PC-9 (cell line): ENCODE measurements at regions of chr7 and their contacts with region 1.

Region 1: DNA sequence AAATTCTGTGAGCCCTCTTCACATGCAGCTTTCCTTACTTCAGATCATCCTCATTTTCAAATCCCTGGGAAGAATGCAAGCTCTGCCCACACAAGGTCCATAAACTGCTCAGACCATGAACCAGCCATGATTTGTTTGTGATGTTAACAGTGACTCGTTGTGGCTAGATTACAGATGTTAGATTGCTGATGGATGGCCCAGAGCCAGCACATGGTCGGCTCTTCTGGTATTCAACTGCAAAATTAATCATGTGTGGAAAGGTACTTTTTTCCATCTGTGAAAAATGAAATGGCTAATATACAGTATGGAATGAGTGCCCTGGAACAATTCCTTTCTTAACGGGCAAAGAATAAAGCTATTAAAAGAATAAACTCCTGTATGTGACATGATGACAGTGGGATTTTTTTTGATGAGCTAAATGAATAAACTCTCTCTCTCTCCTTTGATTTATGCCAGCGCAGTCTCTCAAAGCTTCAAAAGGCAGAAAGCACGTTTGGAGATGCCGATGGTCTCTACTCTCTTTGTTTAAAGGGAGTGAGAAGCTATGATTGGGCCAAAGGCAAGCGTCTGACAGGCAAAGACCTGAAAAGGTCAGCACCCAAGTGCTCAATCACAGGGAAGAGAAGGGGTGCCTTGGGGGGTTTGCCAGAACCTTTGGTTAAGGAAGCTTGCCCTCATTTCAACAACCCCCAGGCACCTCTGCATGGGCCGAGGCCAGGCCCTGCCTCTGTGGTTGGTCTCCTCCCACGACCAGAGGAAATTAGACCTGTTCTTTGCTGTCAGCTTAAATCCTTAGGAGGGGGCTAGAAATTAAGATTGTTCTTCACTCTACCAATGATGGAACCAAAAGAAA is 444.0 kb upstream of the NFE2L3 start:
- DNase-seq: no peak
- H3K4me3 ChIP-seq: no peak overlapping the region
- H3K27ac ChIP-seq: no peak overlapping the region
- H3K4me1 ChIP-seq: no peaks in the 10 kb centered on the region
- H3K27me3 ChIP-seq: peaks cover 49% of the 10 kb centered on the region
- CTCF ChIP-seq: no peak

Region 2: DNA sequence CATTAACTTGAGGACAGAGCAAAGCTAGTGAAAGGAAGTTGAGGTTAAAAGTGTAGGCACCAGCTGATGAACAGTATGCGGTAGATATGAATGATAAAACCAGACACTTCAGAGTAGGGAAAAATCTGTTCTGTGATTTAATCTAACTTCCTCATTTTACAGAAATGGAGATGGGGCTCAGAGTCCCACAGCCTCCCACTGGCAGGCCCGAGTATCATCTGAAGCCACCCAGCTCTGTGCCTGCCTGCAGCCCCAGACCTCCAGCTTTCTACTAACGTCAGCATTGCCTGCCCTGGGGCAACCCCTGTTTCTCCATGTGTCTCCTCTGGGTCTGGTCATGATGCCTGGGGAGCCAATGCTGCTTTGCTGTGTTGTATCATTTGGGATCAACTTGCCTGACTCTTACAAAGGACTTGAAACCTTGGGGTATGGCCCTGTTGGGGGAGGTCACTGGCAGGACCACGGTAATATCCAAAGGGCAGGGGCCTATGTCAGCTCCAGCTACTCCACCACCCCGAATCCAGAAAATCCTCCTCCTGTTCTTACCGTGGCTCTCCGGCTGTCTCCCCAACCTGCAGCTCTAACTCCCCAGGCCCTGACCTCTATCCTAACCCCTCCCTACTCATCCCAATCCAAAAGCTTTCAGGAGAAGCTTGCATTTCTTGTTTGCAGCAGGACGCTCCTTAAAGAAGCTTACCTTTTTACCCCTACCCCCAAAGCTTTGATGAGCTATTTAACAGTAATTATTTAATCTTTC is 1480.2 kb before region 1 on chr7:
- CTCF ChIA-PET with region 1: no interaction called
- POLR2A ChIA-PET with region 1: no interaction called
- intact Hi-C with region 1: no loop called
- DNase-seq: peak in 1 of 2 experiments; percentile 33
- H3K4me3 ChIP-seq: no peak overlapping the region
- H3K27ac ChIP-seq: no peak overlapping the region
- H3K4me1 ChIP-seq: no peaks in the 10 kb centered on the region
- H3K27me3 ChIP-seq: no peaks in the 10 kb centered on the region
- CTCF ChIP-seq: no peak

Region 3: DNA sequence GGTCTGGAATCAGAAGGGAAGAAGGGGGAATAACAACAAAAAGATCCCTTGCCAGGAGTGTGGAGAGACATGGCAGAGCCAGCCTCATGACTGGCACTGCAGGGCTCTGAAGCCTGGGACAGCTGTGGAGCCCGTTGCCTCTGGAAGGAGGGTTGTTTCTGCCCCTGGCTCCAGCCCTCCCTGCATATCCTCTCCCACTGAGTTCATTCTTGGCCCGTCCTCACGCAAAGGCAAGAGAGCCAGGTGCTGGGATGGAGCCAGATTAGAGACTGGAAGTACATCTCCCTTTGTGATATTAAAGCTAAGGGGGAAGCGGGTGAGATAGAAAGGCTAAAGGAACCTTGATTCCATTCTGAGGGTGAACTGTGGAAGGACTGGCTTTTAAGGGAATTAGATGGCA is 338.2 kb before region 1 on chr7:
- CTCF ChIA-PET with region 1: no interaction called
- POLR2A ChIA-PET with region 1: no interaction called
- intact Hi-C with region 1: no loop called
- DNase-seq: no peak
- H3K4me3 ChIP-seq: no peak overlapping the region
- H3K27ac ChIP-seq: no peak overlapping the region
- H3K4me1 ChIP-seq: no peaks in the 10 kb centered on the region
- H3K27me3 ChIP-seq: peaks cover 42% of the 10 kb centered on the region
- CTCF ChIP-seq: no peak

Region 4: DNA sequence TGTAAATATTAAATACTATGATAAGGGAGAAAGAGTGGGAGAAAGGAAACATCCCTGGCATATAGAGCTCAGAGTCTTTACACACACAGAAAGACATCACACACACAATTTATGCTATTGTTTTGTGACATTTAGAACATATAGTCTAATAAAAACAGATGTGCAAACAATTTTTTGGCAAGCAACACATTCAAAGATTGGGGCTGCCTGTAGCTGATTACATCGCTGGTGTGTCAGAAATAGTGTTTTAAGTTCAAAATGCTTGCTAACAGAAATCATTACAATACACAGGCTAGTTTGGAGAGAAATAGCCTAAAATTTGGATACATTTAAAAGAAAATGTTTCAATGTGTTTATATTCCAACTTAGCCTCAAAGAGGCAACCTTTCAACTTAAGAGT is 223.0 kb before region 1 on chr7:
- CTCF ChIA-PET with region 1: interaction called, 16 read pairs
- POLR2A ChIA-PET with region 1: no interaction called
- intact Hi-C with region 1: no loop called
- DNase-seq: no peak
- H3K4me3 ChIP-seq: no peak overlapping the region
- H3K27ac ChIP-seq: no peak overlapping the region
- H3K4me1 ChIP-seq: no peaks in the 10 kb centered on the region
- H3K27me3 ChIP-seq: peaks cover 44% of the 10 kb centered on the region
- CTCF ChIP-seq: no peak